HAP-1 (cell line): ENCODE measurements at regions of chr1 and their contacts with region 1.

Region 1: DNA sequence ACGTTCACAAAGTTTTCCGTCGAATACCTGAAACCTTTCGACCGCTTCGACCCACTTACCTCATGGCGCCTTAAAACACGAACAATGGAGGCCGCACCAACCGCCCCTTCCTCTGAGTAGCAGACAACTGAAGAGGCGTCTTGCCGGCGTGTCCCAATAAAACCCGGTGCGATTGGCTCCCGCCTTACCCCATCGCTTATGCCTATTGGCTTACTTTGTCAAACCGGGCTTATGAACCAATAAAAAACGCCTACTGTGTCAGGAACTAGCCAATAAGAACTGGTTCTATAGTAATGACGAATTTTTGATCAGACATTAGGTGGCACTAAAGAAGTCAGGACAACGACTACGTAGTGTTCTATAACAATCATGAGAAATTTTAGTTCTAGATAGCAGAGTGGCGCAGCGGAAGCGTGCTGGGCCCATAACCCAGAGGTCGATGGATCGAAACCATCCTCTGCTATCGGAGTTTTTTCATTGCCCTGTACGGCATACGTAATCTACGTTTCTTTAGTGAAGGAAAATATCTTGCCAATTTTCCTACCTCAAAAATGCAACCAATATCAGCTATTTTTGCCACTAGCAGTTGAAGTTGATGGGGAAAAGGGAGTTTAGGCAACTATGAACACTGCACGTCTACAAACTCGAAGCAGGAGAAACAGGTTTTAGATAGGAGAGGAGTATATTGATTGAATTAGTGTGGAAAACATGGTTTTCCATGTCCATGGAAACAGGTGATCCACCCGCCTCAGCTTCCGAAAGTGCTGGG is at the start of gene ILF2:
- DNase-seq: peak; percentile 98 to 100
- H3K4me3 ChIP-seq: peak within 1 kb of the TSS; percentile 72
- H3K4me1 ChIP-seq: no peaks in the 10 kb centered on the region
- H3K27me3 ChIP-seq: no peaks in the 10 kb centered on the region

Region 2: GRCh38 chr1:153081736-153082135 is 589.3 kb before region 1 on chr1:
- in situ Hi-C with region 1: no loop called
- DNase-seq: no peak
- H3K4me3 ChIP-seq: no peak overlapping the region
- H3K4me1 ChIP-seq: no peaks in the 10 kb centered on the region
- H3K27me3 ChIP-seq: no peaks in the 10 kb centered on the region

Region 3: GRCh38 chr1:153749408-153750005 is 78.5 kb after region 1 on chr1:
- in situ Hi-C with region 1: loop called (anchors 10 kb)
- DNase-seq: peak; percentile 68 to 79
- H3K4me3 ChIP-seq: no peak overlapping the region
- H3K4me1 ChIP-seq: no peaks in the 10 kb centered on the region
- H3K27me3 ChIP-seq: no peaks in the 10 kb centered on the region